HCT116 (cell line): ENCODE measurements at regions of chr4 and their contacts with region 1.

Region 1: GRCh38 chr4:103099691-103100392 is at the start of gene BDH2:
- DNase-seq: peak; percentile 79
- ATAC-seq: peak; percentile 94
- H3K4me3 ChIP-seq: peak within 1 kb of the TSS; percentile 11 to 42; a peak in 3 of 4 replicates
- H3K27ac ChIP-seq: no peak within 1 kb of the TSS
- H3K4me1 ChIP-seq: peaks cover 0 to 10% of the 10 kb centered on the region in 2 experiments; a peak in 2 of 4 replicates
- H3K27me3 ChIP-seq: no peaks in the 10 kb centered on the region
- CTCF ChIP-seq: peak; percentile 50 to 74 (median 72)
- POLR2A ChIP-seq: peak; percentile 51
- RAD21 ChIP-seq: peak; percentile 89
- total RNA-seq, gene BDH2: 5.0 TPM

Region 2: DNA sequence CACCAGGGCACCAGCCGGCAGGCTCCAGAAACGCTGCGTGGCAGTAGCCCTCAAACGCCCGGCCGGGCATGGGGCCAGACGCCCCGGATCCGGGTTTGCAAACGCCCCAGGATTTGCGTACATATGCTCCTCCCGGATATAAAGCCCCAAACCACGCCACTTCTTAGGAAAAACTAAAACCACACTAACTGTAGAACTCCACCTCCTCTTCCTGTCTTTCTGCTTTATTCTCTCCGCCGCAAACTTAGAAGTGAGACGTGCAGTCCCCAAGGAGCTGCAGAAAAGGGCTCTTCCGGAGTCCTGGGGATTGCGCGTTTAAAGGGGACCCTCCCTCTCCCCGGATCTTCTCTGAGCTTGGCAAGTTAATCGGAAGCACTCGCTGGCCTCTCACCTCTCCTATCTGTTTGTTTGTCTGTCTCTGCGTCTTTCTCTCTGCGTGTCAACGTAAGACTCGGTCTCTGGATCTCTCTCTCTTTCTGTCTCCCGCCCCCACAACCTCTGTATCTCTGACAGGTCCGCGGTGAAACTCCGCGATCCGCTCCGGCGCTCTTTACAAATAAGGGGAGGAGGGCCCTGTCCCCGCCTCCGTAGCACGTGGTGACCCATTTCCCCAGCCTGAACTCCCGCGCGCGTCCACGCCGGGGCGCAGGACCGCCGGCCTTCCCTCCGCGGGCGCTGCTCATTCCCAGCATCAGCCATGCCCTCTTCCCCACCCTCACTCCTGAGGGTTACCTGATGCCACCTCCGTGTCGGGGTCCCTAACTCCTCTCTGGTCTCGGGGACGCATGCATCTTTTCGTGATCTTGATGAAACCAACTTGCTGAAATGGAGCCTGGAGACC is 754.7 kb before region 1 on chr4 and contains the start of gene SLC39A8:
- CTCF ChIA-PET with region 1: no interaction called
- POLR2A ChIA-PET with region 1: no interaction called
- RAD21 ChIA-PET with region 1: no interaction called
- intact Hi-C with region 1: loop called (anchors 5 kb)
- DNase-seq: peak; percentile 66
- ATAC-seq: peak; percentile 84
- H3K4me3 ChIP-seq: peak within 1 kb of the TSS; percentile 59 to 65
- H3K27ac ChIP-seq: peak within 1 kb of the TSS; percentile 57; the same call in 1 of the 2 replicates
- H3K4me1 ChIP-seq: peaks cover 3 to 25% of the 10 kb centered on the region in 2 experiments; a peak in 3 of 4 replicates
- H3K27me3 ChIP-seq: no peaks in the 10 kb centered on the region
- CTCF ChIP-seq: peak; percentile 48 to 82 (median 72); a peak in 5 of 6 replicates
- POLR2A ChIP-seq: peak; percentile 48
- RAD21 ChIP-seq: peak; percentile 70
- total RNA-seq, gene SLC39A8: 13.2 TPM

Region 3: DNA sequence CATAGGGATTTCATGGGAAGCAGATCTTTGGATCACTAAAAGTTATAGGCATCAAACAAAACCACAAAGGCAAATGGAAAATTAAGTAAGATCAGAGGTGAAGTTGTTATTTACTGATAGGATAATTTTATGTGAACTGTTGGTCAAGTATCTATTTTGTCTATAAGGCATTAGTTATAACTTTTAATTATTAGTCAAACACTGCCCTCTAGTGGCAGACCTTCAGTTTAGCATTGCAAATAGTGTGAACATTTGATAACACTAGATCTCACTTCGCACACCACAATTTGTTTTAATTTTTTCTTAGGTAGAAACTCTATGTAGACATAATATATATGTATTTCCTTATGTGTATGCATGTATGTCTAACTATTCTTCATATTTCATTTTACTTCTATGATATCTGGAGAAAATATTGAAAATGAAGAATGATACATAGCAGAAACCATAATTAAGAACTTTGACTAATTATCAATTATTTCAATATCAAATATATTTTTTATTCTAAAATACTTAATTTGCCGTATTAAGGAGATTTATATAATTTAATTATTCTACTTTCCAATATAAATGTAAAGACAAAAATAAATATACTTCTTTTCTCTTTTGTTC is 834.4 kb after region 1 on chr4:
- CTCF ChIA-PET with region 1: no interaction called
- POLR2A ChIA-PET with region 1: no interaction called
- RAD21 ChIA-PET with region 1: no interaction called
- intact Hi-C with region 1: loop called (anchors 10 kb)
- DNase-seq: peak; percentile 58
- ATAC-seq: peak; percentile 77
- H3K4me3 ChIP-seq: no peak overlapping the region
- H3K27ac ChIP-seq: no peak overlapping the region
- H3K4me1 ChIP-seq: no peaks in the 10 kb centered on the region
- H3K27me3 ChIP-seq: no peaks in the 10 kb centered on the region
- CTCF ChIP-seq: peak; percentile 53 to 77 (median 58)
- POLR2A ChIP-seq: no peak
- RAD21 ChIP-seq: peak; percentile 75